PC-3 (cell line): ENCODE measurements at regions of chr21 and their contacts with region 1.

Region 1: GRCh38 chr21:27700974-27701614 is 734.2 kb upstream of the ADAMTS5 start:
- DNase-seq: peak; percentile 87
- ATAC-seq: peak; percentile 97
- H3K4me3 ChIP-seq: no peak overlapping the region
- H3K27ac ChIP-seq: no peak overlapping the region
- H3K4me1 ChIP-seq: no peaks in the 10 kb centered on the region
- H3K27me3 ChIP-seq: no peaks in the 10 kb centered on the region
- CTCF ChIP-seq: peak; percentile 96

Region 2: DNA sequence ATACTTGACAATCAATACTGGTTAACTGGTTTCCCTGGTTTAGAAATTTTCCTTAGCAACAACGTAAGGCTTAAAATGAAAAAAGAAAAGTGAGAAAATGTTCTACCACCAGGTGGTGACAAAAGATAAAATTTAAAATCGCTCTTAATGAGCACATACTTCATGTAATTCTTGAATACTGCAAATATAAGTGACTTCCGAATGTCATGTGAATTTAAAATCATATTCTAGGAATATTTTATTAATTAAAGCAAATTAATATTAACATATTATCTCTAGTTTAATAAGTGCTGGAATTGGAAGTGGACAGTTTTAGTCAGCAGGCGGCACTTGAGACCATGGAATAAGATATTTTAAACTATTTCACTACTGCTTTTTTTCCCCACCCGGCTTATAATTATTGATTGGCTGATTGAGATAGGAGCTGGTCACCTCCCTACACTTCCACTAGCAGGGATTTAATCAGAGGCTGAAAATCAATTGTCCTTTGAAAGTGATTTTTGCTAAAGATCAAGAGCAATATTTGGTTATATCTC is 850.9 kb before region 1 on chr21:
- CTCF ChIA-PET with region 1: interaction called, 6 read pairs
- POLR2A ChIA-PET with region 1: no interaction called
- intact Hi-C with region 1: loop called (anchors 1 kb)
- DNase-seq: peak; percentile 80
- ATAC-seq: no peak
- H3K4me3 ChIP-seq: no peak overlapping the region
- H3K27ac ChIP-seq: no peak overlapping the region
- H3K4me1 ChIP-seq: peaks cover 5% of the 10 kb centered on the region; the same call in 1 of the 2 replicates
- H3K27me3 ChIP-seq: no peaks in the 10 kb centered on the region
- CTCF ChIP-seq: peak; percentile 70

Region 3: GRCh38 chr21:27362249-27362648 is 338.8 kb before region 1 on chr21:
- CTCF ChIA-PET with region 1: no interaction called
- POLR2A ChIA-PET with region 1: no interaction called
- intact Hi-C with region 1: loop called (anchors 5 kb)
- DNase-seq: peak; percentile 12
- ATAC-seq: peak; percentile 79
- H3K4me3 ChIP-seq: no peak overlapping the region
- H3K27ac ChIP-seq: no peak overlapping the region
- H3K4me1 ChIP-seq: no peaks in the 10 kb centered on the region
- H3K27me3 ChIP-seq: no peaks in the 10 kb centered on the region
- CTCF ChIP-seq: no peak; the same call in 1 of the 2 replicates

Region 4: DNA sequence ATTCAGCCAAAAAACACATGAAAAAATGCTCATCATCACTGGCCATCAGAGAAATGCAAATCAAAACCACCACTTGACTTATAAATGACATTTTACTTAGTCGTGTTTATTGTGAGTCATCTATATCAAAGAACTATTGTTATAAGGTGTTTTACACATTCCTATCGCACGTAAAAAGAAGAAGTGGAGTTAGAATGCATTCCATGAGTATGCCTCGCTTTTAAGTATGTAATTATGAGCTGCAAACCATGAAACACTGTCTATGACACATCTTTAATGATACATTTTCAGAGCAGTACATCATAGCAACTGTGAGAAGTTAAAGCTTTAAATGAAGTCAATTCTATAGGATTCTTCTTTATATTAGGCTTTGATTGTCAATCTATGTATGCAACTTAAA is 119.9 kb before region 1 on chr21:
- CTCF ChIA-PET with region 1: interaction called, 3 read pairs
- POLR2A ChIA-PET with region 1: no interaction called
- intact Hi-C with region 1: loop called (anchors 2 kb)
- DNase-seq: peak; percentile 71
- ATAC-seq: peak; percentile 91
- H3K4me3 ChIP-seq: no peak overlapping the region
- H3K27ac ChIP-seq: no peak overlapping the region
- H3K4me1 ChIP-seq: peaks cover 3% of the 10 kb centered on the region; the same call in 1 of the 2 replicates
- H3K27me3 ChIP-seq: no peaks in the 10 kb centered on the region
- CTCF ChIP-seq: no peak